ENCODE measurements at regions of chr3 and their contacts with region 1.

Region 1: DNA sequence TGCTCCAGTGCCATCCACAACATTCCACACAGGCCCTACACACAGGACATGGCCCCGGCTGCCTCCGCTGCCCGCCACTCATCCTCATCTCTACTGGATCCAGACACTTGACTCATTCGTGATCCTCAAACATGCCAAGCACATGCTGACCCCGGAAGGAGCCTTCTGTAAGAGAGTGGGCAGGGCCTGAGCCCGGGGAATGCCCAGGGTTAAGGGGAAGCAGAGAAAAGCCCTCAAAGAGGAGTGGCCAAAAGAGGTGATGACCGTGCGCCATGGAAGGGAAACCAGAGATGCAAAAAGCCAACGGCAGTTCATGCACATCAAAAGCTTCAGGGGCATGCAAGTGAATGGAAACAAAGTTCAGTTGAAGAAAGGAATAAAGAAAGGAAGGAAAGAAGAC is 46.1 kb downstream of the RFTN1 start:
- DNase-seq: peak; percentile 28
- ATAC-seq: peak; percentile 93
- H3K4me3 ChIP-seq: no peak overlapping the region
- H3K27ac ChIP-seq: peak overlapping the region; percentile 53
- H3K4me1 ChIP-seq: peaks cover 28% of the 10 kb centered on the region
- H3K27me3 ChIP-seq: no peaks in the 10 kb centered on the region
- CTCF ChIP-seq: no peak
- EP300 ChIP-seq: no peak
- POLR2A ChIP-seq: peak; percentile 49; the same call in 1 of the 2 replicates
- RAD21 ChIP-seq: no peak

Region 2: DNA sequence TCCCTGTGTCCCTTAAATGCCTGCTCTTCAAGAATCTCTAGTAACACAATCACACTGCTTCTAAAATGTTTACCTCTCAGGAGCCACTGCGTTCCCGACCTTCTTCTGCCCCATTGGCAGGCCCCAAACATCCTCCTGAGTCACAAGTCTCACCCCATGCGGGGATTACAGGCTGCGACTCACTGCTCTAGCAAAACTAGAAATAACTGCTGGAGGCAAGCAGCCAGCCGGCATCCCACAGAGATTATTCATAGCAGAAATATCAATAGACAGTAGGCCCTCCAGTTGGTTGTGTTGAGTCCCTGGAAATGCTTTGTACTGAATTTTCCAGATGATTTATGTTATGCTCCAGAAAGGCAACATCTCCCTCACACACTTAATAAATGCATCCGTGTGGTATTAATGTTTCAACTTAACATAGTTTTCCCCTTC is 18.7 kb before region 1 on chr3:
- CTCF ChIA-PET with region 1: interaction called, 4 read pairs
- POLR2A ChIA-PET with region 1: no interaction called
- RAD21 ChIA-PET with region 1: interaction called, 4 read pairs
- SMC1A ChIA-PET with region 1: interaction called, 11 read pairs
- in situ Hi-C with region 1: no loop called
- intact Hi-C with region 1: no loop called
- DNase-seq: no peak
- ATAC-seq: peak; percentile 73
- H3K4me3 ChIP-seq: no peak overlapping the region
- H3K27ac ChIP-seq: no peak overlapping the region
- H3K4me1 ChIP-seq: 0 out of 2 replicates have a peak, but pooled peaks cover 3% of the 10 kb centered on the region
- H3K27me3 ChIP-seq: no peaks in the 10 kb centered on the region
- CTCF ChIP-seq: no peak
- EP300 ChIP-seq: no peak
- POLR2A ChIP-seq: no peak
- RAD21 ChIP-seq: no peak

Region 3: DNA sequence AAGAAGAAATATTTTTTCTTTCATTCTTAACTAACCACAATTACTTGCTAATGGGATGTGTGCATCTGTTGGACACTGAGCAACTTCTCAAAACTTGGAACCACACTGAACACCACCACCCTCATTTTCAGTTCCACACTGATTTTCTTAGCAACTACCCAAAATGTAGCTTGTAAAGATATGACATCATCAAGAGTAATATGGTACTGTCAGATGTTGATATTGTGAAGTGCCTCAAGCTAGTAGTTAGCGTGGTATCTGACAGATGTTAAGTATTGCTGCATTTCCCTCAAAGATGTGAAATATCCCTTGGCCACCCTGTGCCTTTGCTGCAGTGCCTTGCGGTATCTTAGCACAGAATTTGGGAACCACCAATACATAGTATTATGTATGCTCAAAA is 36.8 kb after region 1 on chr3:
- CTCF ChIA-PET with region 1: no interaction called
- POLR2A ChIA-PET with region 1: interaction called, 9 read pairs
- RAD21 ChIA-PET with region 1: no interaction called
- SMC1A ChIA-PET with region 1: interaction called, 7 read pairs
- in situ Hi-C with region 1: no loop called
- intact Hi-C with region 1: loop called (anchors 2 kb)
- DNase-seq: peak; percentile 96
- ATAC-seq: peak; percentile 73
- H3K4me3 ChIP-seq: no peak overlapping the region
- H3K27ac ChIP-seq: peak overlapping the region; percentile 60
- H3K4me1 ChIP-seq: peaks cover 61% of the 10 kb centered on the region
- H3K27me3 ChIP-seq: no peaks in the 10 kb centered on the region
- CTCF ChIP-seq: no peak
- EP300 ChIP-seq: peak; percentile 91 to 92
- POLR2A ChIP-seq: no peak
- RAD21 ChIP-seq: no peak

Region 4: DNA sequence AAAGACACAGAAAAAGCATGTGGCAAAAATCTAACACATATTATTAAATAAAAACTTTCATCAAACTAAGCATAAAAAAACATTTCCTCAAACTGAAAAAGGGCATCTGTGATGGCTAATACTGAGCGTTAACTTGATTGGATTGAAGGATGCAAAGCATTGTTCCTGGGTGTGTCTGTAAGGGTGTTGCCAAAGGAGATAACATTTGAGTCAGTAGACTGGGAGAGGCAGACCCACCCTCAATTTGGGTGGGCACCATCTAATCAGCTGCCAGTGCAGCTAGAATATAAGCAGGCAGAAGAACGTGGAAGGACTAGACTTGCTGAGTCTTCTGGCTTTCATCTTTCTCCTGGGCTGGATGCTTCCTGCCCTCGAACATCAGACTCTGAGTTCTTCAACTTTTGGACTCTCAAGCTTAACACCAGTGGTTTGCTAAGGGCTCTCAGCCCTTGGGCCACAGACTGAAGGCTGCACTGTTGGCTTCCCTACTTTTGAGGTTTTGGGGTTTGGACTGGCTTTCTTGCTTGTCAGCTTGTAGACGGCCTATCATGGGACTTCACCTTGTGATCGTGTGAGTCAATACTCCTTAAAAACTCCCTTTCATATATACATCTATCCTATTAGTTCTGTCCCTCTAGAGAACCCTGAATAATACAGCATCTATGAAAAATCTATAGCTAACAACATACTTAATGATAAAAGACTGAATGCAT is 92.4 kb after region 1 on chr3:
- CTCF ChIA-PET with region 1: no interaction called
- POLR2A ChIA-PET with region 1: no interaction called
- RAD21 ChIA-PET with region 1: no interaction called
- SMC1A ChIA-PET with region 1: no interaction called
- in situ Hi-C with region 1: no loop called
- intact Hi-C with region 1: no loop called
- DNase-seq: no peak
- ATAC-seq: no peak
- H3K4me3 ChIP-seq: no peak overlapping the region
- H3K27ac ChIP-seq: no peak overlapping the region
- H3K4me1 ChIP-seq: no peaks in the 10 kb centered on the region
- H3K27me3 ChIP-seq: no peaks in the 10 kb centered on the region
- CTCF ChIP-seq: no peak
- EP300 ChIP-seq: no peak
- POLR2A ChIP-seq: no peak
- RAD21 ChIP-seq: no peak